Uterus (tissue), 4 donors: ENCODE measurements at regions of chr2 and their contacts with region 1.

Region 1: GRCh38 chr2:46351750-46352138 is 54.5 kb downstream of the EPAS1 start:
- DNase-seq: peak in 1 of 2 donors; percentile 61
- H3K4me3 ChIP-seq: no peak overlapping the region
- H3K27ac ChIP-seq: peak overlapping the region; percentile 57 to 76
- H3K4me1 ChIP-seq: no peaks in the 10 kb centered on the region
- H3K27me3 ChIP-seq: no peaks in the 10 kb centered on the region
- CTCF ChIP-seq: no peak
- POLR2A ChIP-seq: peak in 1 of 2 donors; percentile 34

Region 2: GRCh38 chr2:46296840-46297545 is 54.8 kb before region 1 on chr2 and contains the start of gene EPAS1:
- intact Hi-C with region 1: loop called (anchors 10 kb)
- DNase-seq: peak; percentile 90 to 94
- H3K4me3 ChIP-seq: peak within 1 kb of the TSS; percentile 72 to 83
- H3K27ac ChIP-seq: peak within 1 kb of the TSS; percentile 88 to 94
- H3K4me1 ChIP-seq: no peaks in the 10 kb centered on the region
- H3K27me3 ChIP-seq: no peaks in the 10 kb centered on the region
- CTCF ChIP-seq: peak in 2 of 4 experiments; percentile 12
- POLR2A ChIP-seq: peak; percentile 90 to 98
- total RNA-seq, gene EPAS1: 35.0 to 465 (median 202) TPM